Activated CD4-positive, alpha-beta memory T cell treated with anti-CD3 and anti-CD28 coated beads for 36 hours (primary cell): ENCODE measurements at regions of chr13 and their contacts with region 1.

Region 1: GRCh38 chr13:60850526-60850925 is 453.5 kb downstream of the TDRD3 start:
- DNase-seq: no peak
- H3K4me3 Mint-ChIP-seq: no peak overlapping the region
- H3K27ac Mint-ChIP-seq: no peak overlapping the region
- H3K4me1 Mint-ChIP-seq: no peaks in the 10 kb centered on the region
- H3K27me3 Mint-ChIP-seq: no peaks in the 10 kb centered on the region

Region 2: GRCh38 chr13:60369242-60369641 is 481.3 kb before region 1 on chr13:
- CTCF ChIA-PET with region 1: no interaction called
- POLR2A ChIA-PET with region 1: no interaction called
- intact Hi-C with region 1: no loop called
- DNase-seq: no peak
- H3K4me3 Mint-ChIP-seq: no peak overlapping the region
- H3K27ac Mint-ChIP-seq: no peak overlapping the region
- H3K4me1 Mint-ChIP-seq: peaks cover 2% of the 10 kb centered on the region
- H3K27me3 Mint-ChIP-seq: peaks cover 2% of the 10 kb centered on the region

Region 3: GRCh38 chr13:60733933-60734332 is 116.6 kb before region 1 on chr13:
- CTCF ChIA-PET with region 1: no interaction called
- POLR2A ChIA-PET with region 1: no interaction called
- intact Hi-C with region 1: no loop called
- DNase-seq: no peak
- H3K4me3 Mint-ChIP-seq: no peak overlapping the region
- H3K27ac Mint-ChIP-seq: no peak overlapping the region
- H3K4me1 Mint-ChIP-seq: no peaks in the 10 kb centered on the region
- H3K27me3 Mint-ChIP-seq: no peaks in the 10 kb centered on the region

Region 4: DNA sequence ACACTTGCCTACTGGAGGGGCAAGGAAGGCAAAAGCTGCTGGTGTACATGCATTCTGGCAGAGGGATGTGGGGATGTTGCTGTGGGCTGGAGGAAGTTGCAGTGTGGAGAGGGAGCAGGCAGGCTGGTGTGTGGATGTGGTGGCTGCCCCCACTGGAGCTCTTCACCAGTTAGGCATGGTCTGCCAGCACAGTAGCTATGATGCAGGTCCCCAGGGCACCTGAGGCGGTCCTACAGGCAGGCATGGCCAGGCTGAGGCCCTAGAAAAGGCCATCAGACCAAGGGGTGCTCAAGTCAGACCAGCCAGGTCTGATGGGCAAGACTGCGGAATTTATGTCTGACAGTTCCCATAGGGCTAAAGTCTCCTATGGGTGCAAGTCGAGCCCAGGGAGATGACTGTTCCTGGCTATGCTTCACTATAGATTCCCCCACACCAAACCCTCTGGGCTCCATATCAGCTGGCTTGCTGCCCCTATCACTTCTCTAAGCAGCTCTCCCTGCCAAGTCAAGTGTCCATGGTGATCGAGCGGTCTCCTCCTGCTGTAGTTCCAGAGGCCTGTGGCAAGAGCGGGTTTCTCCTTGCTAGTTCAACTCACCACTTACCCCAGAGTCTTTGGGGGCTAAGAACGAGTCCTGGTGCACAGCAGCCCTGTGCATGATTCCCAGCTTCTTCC is 19.6 kb after region 1 on chr13:
- CTCF ChIA-PET with region 1: no interaction called
- POLR2A ChIA-PET with region 1: no interaction called
- intact Hi-C with region 1: loop called (anchors 2 kb)
- DNase-seq: no peak
- H3K4me3 Mint-ChIP-seq: no peak overlapping the region
- H3K27ac Mint-ChIP-seq: no peak overlapping the region
- H3K4me1 Mint-ChIP-seq: no peaks in the 10 kb centered on the region
- H3K27me3 Mint-ChIP-seq: no peaks in the 10 kb centered on the region

Region 5: GRCh38 chr13:60887711-60888110 is 37.2 kb after region 1 on chr13:
- CTCF ChIA-PET with region 1: no interaction called
- POLR2A ChIA-PET with region 1: no interaction called
- intact Hi-C with region 1: no loop called
- DNase-seq: no peak
- H3K4me3 Mint-ChIP-seq: no peak overlapping the region
- H3K27ac Mint-ChIP-seq: no peak overlapping the region
- H3K4me1 Mint-ChIP-seq: no peaks in the 10 kb centered on the region
- H3K27me3 Mint-ChIP-seq: no peaks in the 10 kb centered on the region